ENCODE measurements at regions of chr5 and their contacts with region 1.

Region 1: GRCh38 chr5:169670769-169671525 is 33.9 kb downstream of the DOCK2 start:
- DNase-seq: peak in 1 of 9 experiments; percentile 22
- ATAC-seq: no peak
- H3K4me3 ChIP-seq: no peak overlapping the region
- H3K4me3 Mint-ChIP-seq: no peak overlapping the region
- H3K27ac ChIP-seq: no peak overlapping the region
- H3K27ac Mint-ChIP-seq: no peak overlapping the region
- H3K4me1 ChIP-seq: no peaks in the 10 kb centered on the region
- H3K4me1 Mint-ChIP-seq: peaks cover 18% of the 10 kb centered on the region
- H3K27me3 ChIP-seq: no peaks in the 10 kb centered on the region
- H3K27me3 Mint-ChIP-seq: no peaks in the 10 kb centered on the region
- CTCF ChIP-seq: no peak

Region 2: DNA sequence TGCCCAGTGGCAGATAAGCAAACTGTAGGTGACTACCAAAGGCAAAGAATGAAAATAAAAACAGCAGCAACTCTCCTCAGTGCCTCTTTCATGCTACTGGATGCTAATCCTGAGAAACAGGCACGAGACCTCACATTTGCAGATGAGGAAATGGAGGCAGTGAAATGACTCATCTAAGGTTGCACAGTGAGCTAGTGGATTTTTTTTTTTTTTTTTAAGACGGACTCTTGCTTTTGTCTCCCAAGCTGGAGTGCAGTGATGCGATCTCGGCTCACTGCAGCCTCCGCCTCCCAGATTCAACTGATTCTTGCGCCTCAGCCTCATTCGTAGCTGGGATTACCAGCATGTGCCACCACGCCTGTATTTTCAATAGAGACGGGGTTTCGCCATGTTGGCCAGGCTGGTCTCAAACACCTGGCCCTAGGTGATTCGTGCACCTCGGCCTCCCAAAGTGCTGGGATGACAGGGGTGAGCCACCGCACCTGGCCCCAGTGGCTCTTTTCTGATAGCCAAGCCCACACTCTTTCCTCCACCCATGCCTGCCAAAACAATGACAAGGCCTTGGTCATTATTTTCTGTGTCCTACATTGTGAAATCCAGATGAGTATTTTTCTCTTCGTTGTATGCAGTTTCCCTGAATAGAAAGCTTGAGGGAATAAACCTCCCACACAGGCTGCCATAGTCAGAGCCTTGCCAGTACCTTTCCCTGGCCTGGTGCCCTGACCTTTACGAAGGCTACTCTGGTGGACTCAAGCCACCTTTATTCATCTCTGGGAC is 14.6 kb before region 1 on chr5:
- CTCF ChIA-PET with region 1: interaction called, 3 read pairs
- POLR2A ChIA-PET with region 1: no interaction called
- intact Hi-C with region 1: loop called in 1 of 2 experiments (anchors 1 kb)
- DNase-seq: peak in 2 of 9 experiments; percentile 26 to 58
- ATAC-seq: peak; percentile 41
- H3K4me3 ChIP-seq: no peak overlapping the region
- H3K4me3 Mint-ChIP-seq: peak overlapping the region; percentile 15
- H3K27ac ChIP-seq: peak overlapping the region in 1 of 2 experiments; percentile 4
- H3K27ac Mint-ChIP-seq: peak overlapping the region; percentile 60
- H3K4me1 ChIP-seq: peaks cover 49% of the 10 kb centered on the region
- H3K4me1 Mint-ChIP-seq: peaks cover 82% of the 10 kb centered on the region
- H3K27me3 ChIP-seq: no peaks in the 10 kb centered on the region
- H3K27me3 Mint-ChIP-seq: no peaks in the 10 kb centered on the region
- CTCF ChIP-seq: no peak